CD4-positive, alpha-beta T cell (primary cell): ENCODE measurements at regions of chr17 and their contacts with region 1.

Region 1: DNA sequence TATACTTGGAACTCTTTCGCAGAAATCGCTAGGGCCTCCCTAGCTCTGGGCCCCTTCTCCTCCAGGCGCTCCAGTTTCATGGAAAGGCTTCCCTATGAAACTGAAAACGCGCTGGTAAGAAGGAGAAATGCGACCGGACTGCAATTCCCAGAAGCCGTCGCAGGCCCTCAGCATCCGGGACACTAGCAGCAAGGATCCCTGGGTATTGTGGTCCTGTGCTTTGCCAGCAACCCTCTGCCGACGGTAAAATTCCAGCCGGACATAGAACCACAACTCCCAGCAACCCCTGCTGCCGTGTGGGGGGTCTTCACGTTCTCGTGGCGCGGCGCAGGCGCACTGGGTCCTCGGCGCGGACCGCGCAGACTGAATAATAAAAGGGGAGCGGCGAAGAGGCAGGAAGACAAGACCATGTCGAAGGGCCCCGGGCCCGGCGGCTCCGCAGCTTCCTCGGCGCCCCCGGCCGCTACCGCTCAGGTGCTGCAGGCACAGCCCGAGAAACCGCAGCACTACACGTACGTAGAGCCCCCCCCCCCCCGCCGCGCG is at the start of gene UNK:
- DNase-seq: peak; percentile 90 to 99 (median 94)
- ATAC-seq: peak; percentile 63
- H3K4me3 ChIP-seq: peak within 1 kb of the TSS; percentile 69
- H3K4me3 Mint-ChIP-seq: peak within 1 kb of the TSS; percentile 92
- H3K27ac ChIP-seq: peak within 1 kb of the TSS; percentile 99 to 100
- H3K27ac Mint-ChIP-seq: peak within 1 kb of the TSS; percentile 93
- H3K4me1 ChIP-seq: peaks cover 45% of the 10 kb centered on the region
- H3K4me1 Mint-ChIP-seq: peaks cover 52% of the 10 kb centered on the region
- H3K27me3 ChIP-seq: no peaks in the 10 kb centered on the region
- H3K27me3 Mint-ChIP-seq: peaks cover 3% of the 10 kb centered on the region
- CTCF ChIP-seq: no peak
- total RNA-seq, gene UNK: 33.7 to 36.1 TPM

Region 2: GRCh38 chr17:75456417-75457046 is 328.0 kb before region 1 on chr17 and contains the start of gene TMEM94:
- CTCF ChIA-PET with region 1: no interaction called
- POLR2A ChIA-PET with region 1: interaction called, 5 read pairs
- intact Hi-C with region 1: loop called in 1 of 2 experiments (anchors 5 kb)
- DNase-seq: peak; percentile 79 to 97 (median 88)
- ATAC-seq: peak; percentile 96
- H3K4me3 ChIP-seq: peak within 1 kb of the TSS; percentile 70
- H3K4me3 Mint-ChIP-seq: peak within 1 kb of the TSS; percentile 100
- H3K27ac ChIP-seq: peak within 1 kb of the TSS; percentile 23 to 59
- H3K27ac Mint-ChIP-seq: peak within 1 kb of the TSS; percentile 91
- H3K4me1 ChIP-seq: peaks cover 17% of the 10 kb centered on the region
- H3K4me1 Mint-ChIP-seq: peaks cover 29% of the 10 kb centered on the region
- H3K27me3 ChIP-seq: no peaks in the 10 kb centered on the region
- H3K27me3 Mint-ChIP-seq: no peaks in the 10 kb centered on the region
- CTCF ChIP-seq: no peak
- total RNA-seq, gene TMEM94: 52.8 to 57.3 TPM

Region 3: DNA sequence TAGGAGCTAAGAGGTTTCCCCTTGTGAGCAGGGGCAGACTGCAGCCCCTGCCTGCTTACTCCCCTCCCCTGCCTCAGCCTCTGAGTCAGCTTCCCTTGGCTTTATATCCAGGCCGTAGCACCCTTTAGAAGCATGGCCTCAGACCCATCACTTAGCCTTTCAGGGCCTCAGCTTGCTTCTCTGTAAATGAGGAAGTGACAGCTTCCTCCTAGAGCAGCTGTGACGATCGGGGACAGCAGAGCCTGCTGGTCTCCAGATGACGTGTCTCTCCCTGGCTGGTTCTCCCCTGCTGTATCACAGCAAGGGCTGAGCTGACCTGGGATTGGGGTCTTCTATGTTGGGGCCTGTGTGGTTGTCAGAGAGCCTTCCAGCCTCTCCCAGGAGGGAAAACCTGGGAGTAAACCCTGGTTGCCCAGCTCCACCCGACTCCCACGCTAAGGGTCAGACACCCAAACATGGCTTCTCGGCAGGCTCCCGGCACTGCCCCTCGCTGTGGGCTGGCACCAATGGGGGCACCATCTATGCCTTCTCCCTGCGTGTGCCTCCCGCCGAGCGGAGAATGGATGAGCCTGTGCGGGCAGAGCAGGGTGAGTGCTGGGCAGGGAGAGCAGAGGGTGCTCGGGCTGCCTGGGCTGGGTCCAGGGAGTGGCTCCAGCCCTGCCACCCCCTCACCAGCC is 213.2 kb before region 1 on chr17:
- CTCF ChIA-PET with region 1: no interaction called
- POLR2A ChIA-PET with region 1: no interaction called
- intact Hi-C with region 1: no loop called
- DNase-seq: peak in 3 of 14 experiments; percentile 30 to 76 (median 61)
- ATAC-seq: no peak
- H3K4me3 ChIP-seq: no peak overlapping the region
- H3K4me3 Mint-ChIP-seq: no peak overlapping the region
- H3K27ac ChIP-seq: no peak overlapping the region
- H3K27ac Mint-ChIP-seq: no peak overlapping the region
- H3K4me1 ChIP-seq: peaks cover 6% of the 10 kb centered on the region
- H3K4me1 Mint-ChIP-seq: no peaks in the 10 kb centered on the region
- H3K27me3 ChIP-seq: no peaks in the 10 kb centered on the region
- H3K27me3 Mint-ChIP-seq: no peaks in the 10 kb centered on the region
- CTCF ChIP-seq: no peak

Region 4: DNA sequence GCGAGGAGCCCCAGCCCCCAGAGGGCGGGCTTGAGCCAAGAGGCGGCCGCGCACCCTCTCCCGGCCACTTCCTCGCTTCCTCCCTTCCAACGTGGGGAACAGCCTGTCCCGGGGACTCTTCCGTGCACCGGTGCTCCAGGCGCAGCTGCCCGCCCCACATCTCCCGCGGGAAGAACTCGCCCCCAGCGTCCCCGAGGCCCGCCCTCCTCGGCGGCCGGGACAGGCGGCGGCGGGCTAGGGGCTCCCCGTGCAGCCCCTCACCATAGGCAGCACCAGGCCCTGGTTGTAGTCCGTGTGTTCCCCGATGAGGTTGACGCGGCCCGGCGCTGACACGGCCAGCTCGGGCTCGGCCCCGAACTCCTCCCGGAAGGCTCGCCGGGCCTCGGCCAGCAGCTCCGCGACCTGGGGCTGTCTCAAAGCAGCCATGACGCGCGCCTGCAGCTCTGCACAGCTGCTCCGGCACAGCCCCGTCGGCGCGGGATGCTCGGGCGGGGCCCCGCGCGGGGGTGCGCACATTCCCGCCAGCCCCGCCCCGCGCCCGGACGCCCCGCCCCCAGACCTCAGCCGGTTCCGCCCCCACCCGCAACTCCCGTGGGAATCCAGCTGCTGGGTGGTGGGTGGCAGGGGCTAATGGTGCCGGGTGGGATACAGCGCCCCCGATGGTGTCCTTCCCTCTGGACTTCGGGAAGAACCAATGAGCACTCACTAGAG is 19.7 kb before region 1 on chr17 and contains the start of gene GALK1:
- CTCF ChIA-PET with region 1: interaction called, 17 read pairs
- POLR2A ChIA-PET with region 1: interaction called, 246 read pairs
- intact Hi-C with region 1: loop called (anchors 2 kb)
- DNase-seq: peak; percentile 58 to 89 (median 70)
- ATAC-seq: peak; percentile 95
- H3K4me3 ChIP-seq: peak within 1 kb of the TSS; percentile 65
- H3K4me3 Mint-ChIP-seq: peak within 1 kb of the TSS; percentile 74
- H3K27ac ChIP-seq: no peak within 1 kb of the TSS
- H3K27ac Mint-ChIP-seq: peak within 1 kb of the TSS; percentile 44
- H3K4me1 ChIP-seq: peaks cover 24% of the 10 kb centered on the region
- H3K4me1 Mint-ChIP-seq: peaks cover 16% of the 10 kb centered on the region
- H3K27me3 ChIP-seq: no peaks in the 10 kb centered on the region
- H3K27me3 Mint-ChIP-seq: no peaks in the 10 kb centered on the region
- CTCF ChIP-seq: peak; percentile 27
- total RNA-seq, gene GALK1: 5.9 to 6.0 TPM

Region 5: DNA sequence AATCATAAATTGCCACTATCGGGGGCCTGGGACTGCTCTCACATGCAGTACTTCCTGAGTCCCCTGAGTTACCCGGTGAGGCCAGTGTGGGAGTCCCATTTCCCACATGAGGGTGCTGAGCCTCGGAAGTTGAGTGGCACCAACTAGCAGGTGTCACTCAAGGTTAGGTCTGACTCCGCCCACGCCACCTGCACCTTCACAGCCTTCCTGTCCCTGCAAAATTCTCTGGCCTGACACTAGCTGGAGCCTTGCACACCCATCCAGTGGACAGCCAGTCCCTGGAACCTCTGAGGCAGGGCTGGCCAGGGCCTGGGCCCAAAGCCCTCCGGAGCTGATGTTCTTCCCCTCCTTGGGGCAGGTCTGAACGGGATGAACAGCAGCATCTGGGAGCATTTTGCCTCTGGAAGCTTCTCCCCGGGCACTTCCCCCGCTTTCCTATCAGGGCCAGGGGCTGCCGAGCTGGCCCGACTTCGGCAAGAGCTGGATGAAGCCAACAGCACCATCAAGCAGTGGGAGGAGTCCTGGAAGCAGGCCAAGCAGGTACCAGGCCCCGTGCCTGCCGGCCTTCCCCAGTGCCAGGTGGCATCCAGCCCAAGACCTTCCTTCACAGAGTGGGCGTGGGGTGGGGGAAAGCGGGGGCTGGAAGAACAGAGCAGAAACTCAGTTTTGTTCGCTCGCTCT is 37.7 kb after region 1 on chr17:
- CTCF ChIA-PET with region 1: interaction called, 6 read pairs
- POLR2A ChIA-PET with region 1: interaction called, 36 read pairs
- intact Hi-C with region 1: loop called in 1 of 2 experiments (anchors 5 kb)
- DNase-seq: peak in 11 of 14 experiments; percentile 11 to 71 (median 45)
- ATAC-seq: peak; percentile 94
- H3K4me3 ChIP-seq: no peak overlapping the region
- H3K4me3 Mint-ChIP-seq: no peak overlapping the region
- H3K27ac ChIP-seq: peak overlapping the region; percentile 37 to 41
- H3K27ac Mint-ChIP-seq: peak overlapping the region; percentile 84
- H3K4me1 ChIP-seq: peaks cover 31% of the 10 kb centered on the region
- H3K4me1 Mint-ChIP-seq: peaks cover 17% of the 10 kb centered on the region
- H3K27me3 ChIP-seq: no peaks in the 10 kb centered on the region
- H3K27me3 Mint-ChIP-seq: no peaks in the 10 kb centered on the region
- CTCF ChIP-seq: no peak

Region 6: GRCh38 chr17:75845049-75845860 is 60.7 kb after region 1 on chr17:
- CTCF ChIA-PET with region 1: interaction called, 4 read pairs
- POLR2A ChIA-PET with region 1: interaction called, 41 read pairs
- intact Hi-C with region 1: loop called in 1 of 2 experiments (anchors 5 kb)
- DNase-seq: peak in 13 of 14 experiments; percentile 40 to 84 (median 55)
- ATAC-seq: peak; percentile 54
- H3K4me3 ChIP-seq: peak overlapping the region; percentile 81
- H3K4me3 Mint-ChIP-seq: peak overlapping the region; percentile 81
- H3K27ac ChIP-seq: peak overlapping the region; percentile 94 to 95
- H3K27ac Mint-ChIP-seq: peak overlapping the region; percentile 76
- H3K4me1 ChIP-seq: peaks cover 66% of the 10 kb centered on the region
- H3K4me1 Mint-ChIP-seq: peaks cover 26% of the 10 kb centered on the region
- H3K27me3 ChIP-seq: no peaks in the 10 kb centered on the region
- H3K27me3 Mint-ChIP-seq: no peaks in the 10 kb centered on the region
- CTCF ChIP-seq: peak; percentile 55

Region 7: GRCh38 chr17:75877752-75878173 is 93.2 kb after region 1 on chr17:
- CTCF ChIA-PET with region 1: interaction called, 3 read pairs
- POLR2A ChIA-PET with region 1: interaction called, 26 read pairs
- intact Hi-C with region 1: no loop called
- DNase-seq: peak; percentile 52 to 90 (median 66)
- ATAC-seq: peak; percentile 72
- H3K4me3 ChIP-seq: peak overlapping the region; percentile 60
- H3K4me3 Mint-ChIP-seq: peak overlapping the region; percentile 91
- H3K27ac ChIP-seq: peak overlapping the region; percentile 15 to 66
- H3K27ac Mint-ChIP-seq: peak overlapping the region; percentile 91
- H3K4me1 ChIP-seq: peaks cover 64% of the 10 kb centered on the region
- H3K4me1 Mint-ChIP-seq: peaks cover 51% of the 10 kb centered on the region
- H3K27me3 ChIP-seq: no peaks in the 10 kb centered on the region
- H3K27me3 Mint-ChIP-seq: no peaks in the 10 kb centered on the region
- CTCF ChIP-seq: peak; percentile 70

Region 8: GRCh38 chr17:75950821-75951554 is 166.4 kb after region 1 on chr17:
- CTCF ChIA-PET with region 1: no interaction called
- POLR2A ChIA-PET with region 1: no interaction called
- intact Hi-C with region 1: no loop called
- DNase-seq: no peak
- ATAC-seq: no peak
- H3K4me3 ChIP-seq: no peak overlapping the region
- H3K4me3 Mint-ChIP-seq: no peak overlapping the region
- H3K27ac ChIP-seq: no peak overlapping the region
- H3K27ac Mint-ChIP-seq: no peak overlapping the region
- H3K4me1 ChIP-seq: no peaks in the 10 kb centered on the region
- H3K4me1 Mint-ChIP-seq: no peaks in the 10 kb centered on the region
- H3K27me3 ChIP-seq: no peaks in the 10 kb centered on the region
- H3K27me3 Mint-ChIP-seq: no peaks in the 10 kb centered on the region
- CTCF ChIP-seq: no peak

Region 9: GRCh38 chr17:76737082-76737675 is 952.6 kb after region 1 on chr17 and contains the start of gene SRSF2:
- CTCF ChIA-PET with region 1: no interaction called
- POLR2A ChIA-PET with region 1: no interaction called
- intact Hi-C with region 1: loop called in 1 of 2 experiments (anchors 10 kb)
- DNase-seq: peak; percentile 95 to 99 (median 98)
- ATAC-seq: peak; percentile 64
- H3K4me3 ChIP-seq: peak within 1 kb of the TSS; percentile 96
- H3K4me3 Mint-ChIP-seq: peak within 1 kb of the TSS; percentile 96
- H3K27ac ChIP-seq: peak within 1 kb of the TSS; percentile 99
- H3K27ac Mint-ChIP-seq: peak within 1 kb of the TSS; percentile 96
- H3K4me1 ChIP-seq: peaks cover 37% of the 10 kb centered on the region
- H3K4me1 Mint-ChIP-seq: peaks cover 60% of the 10 kb centered on the region
- H3K27me3 ChIP-seq: no peaks in the 10 kb centered on the region
- H3K27me3 Mint-ChIP-seq: no peaks in the 10 kb centered on the region
- CTCF ChIP-seq: no peak
- total RNA-seq, gene SRSF2: 448 to 460 TPM